PC-9 (cell line): ENCODE measurements at regions of chr9 and their contacts with region 1.

Region 1: DNA sequence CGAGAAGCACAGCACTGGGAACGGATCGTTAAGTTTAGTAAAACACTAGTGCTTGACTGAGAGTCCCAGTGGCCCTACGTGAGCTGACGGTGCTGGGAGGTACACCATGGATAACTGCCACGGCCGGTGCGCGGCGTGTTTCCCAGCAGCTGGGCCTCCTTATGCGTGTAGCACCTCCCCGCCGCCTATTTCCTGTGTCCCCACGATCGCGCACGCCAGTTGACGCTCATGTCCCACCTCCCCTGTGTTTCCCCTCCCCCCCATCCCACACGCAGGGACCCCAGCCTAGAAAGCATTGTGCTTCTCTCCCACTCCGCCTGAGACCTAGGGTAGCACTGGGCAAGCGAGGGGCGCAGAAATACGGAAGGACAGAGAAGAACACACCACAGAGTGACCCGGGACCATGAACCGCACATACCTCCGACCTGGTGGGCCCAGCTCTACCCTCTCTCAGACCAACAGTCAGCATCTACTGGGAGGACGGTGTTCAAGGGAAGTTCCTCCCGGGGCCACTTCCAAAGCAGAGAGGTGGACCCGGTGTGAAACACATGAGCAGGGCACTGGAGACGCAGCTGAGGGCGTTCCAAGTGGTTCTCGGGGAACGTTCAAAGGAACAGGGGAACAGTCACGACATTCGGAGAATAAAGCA is 45.6 kb downstream of the DBH start:
- DNase-seq: no peak
- H3K4me3 ChIP-seq: no peak overlapping the region
- H3K27ac ChIP-seq: no peak overlapping the region
- H3K4me1 ChIP-seq: no peaks in the 10 kb centered on the region
- H3K27me3 ChIP-seq: peaks cover 94% of the 10 kb centered on the region
- CTCF ChIP-seq: no peak

Region 2: GRCh38 chr9:133666845-133667244 is 14.9 kb before region 1 on chr9:
- CTCF ChIA-PET with region 1: interaction called, 12 read pairs
- POLR2A ChIA-PET with region 1: no interaction called
- intact Hi-C with region 1: no loop called
- DNase-seq: no peak
- H3K4me3 ChIP-seq: no peak overlapping the region
- H3K27ac ChIP-seq: no peak overlapping the region
- H3K4me1 ChIP-seq: no peaks in the 10 kb centered on the region
- H3K27me3 ChIP-seq: peaks cover 81% of the 10 kb centered on the region
- CTCF ChIP-seq: no peak